ENCODE measurements at regions of chr20 and their contacts with region 1.

Region 1: GRCh38 chr20:24100385-24101011 is 111.9 kb upstream of the GGTLC1 start:
- DNase-seq: peak; percentile 64
- H3K4me3 ChIP-seq: no peak overlapping the region
- H3K27ac ChIP-seq: no peak overlapping the region
- H3K4me1 ChIP-seq: peaks cover 33% of the 10 kb centered on the region
- H3K27me3 ChIP-seq: peaks cover 0 to 2% of the 10 kb centered on the region in 2 experiments
- CTCF ChIP-seq: peak; percentile 77 to 86
- POLR2A ChIP-seq: no peak

Region 2: DNA sequence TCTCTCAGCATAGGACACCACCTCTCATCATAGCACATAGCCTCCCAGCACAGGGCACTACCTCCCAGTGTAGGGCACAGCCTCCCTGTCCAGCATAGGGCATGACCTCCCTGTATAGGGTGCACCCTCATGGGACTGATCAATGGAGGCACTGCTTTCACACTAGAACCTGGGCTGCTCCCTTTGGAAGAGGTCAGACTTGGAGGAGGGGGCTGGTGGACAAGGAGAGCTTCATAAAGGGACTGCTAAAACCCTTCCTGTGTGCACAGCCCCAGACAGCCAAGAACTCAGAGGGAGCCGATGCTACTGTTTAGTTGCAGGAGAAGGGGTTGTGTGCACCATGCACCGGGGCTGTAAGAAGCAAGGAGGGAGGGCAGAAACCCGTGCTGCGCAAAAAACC is 389.7 kb before region 1 on chr20:
- CTCF ChIA-PET with region 1: no interaction called
- POLR2A ChIA-PET with region 1: no interaction called
- dilution Hi-C with region 1: no loop called
- intact Hi-C with region 1: no loop called
- DNase-seq: no peak
- H3K4me3 ChIP-seq: no peak overlapping the region
- H3K27ac ChIP-seq: no peak overlapping the region
- H3K4me1 ChIP-seq: no peaks in the 10 kb centered on the region
- H3K27me3 ChIP-seq: peaks cover 10 to 13% of the 10 kb centered on the region in 2 experiments
- CTCF ChIP-seq: no peak
- POLR2A ChIP-seq: no peak

Region 3: GRCh38 chr20:23889775-23890211 is 210.7 kb before region 1 on chr20:
- CTCF ChIA-PET with region 1: interaction called, 3 read pairs
- POLR2A ChIA-PET with region 1: no interaction called
- dilution Hi-C with region 1: no loop called
- intact Hi-C with region 1: loop called (anchors 5 kb)
- DNase-seq: peak; percentile 42
- H3K4me3 ChIP-seq: no peak overlapping the region
- H3K27ac ChIP-seq: no peak overlapping the region
- H3K4me1 ChIP-seq: no peaks in the 10 kb centered on the region
- H3K27me3 ChIP-seq: no peaks in the 10 kb centered on the region
- CTCF ChIP-seq: peak; percentile 63 to 73
- POLR2A ChIP-seq: no peak

Region 4: DNA sequence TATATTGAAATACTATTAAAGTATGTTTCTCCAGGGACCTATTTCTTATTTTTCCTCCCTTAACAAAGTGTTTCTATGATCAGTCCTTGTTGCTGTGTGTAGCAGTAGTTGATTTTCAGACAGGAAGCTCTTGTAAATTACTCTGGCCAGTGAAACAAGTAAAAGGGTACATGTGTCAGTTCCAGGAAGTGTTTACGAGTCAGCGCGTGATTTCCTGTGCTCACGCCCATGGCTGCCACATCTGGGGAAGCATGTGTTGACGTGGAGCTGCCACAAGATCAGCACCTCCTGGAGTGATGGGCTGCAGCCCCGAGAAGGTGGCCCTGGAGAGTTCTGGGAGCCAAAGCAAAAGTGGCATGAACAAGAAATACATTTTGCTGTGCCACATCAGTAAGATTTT is 73.3 kb before region 1 on chr20:
- CTCF ChIA-PET with region 1: interaction called, 6 read pairs
- POLR2A ChIA-PET with region 1: no interaction called
- dilution Hi-C with region 1: no loop called
- intact Hi-C with region 1: loop called (anchors 1 kb)
- DNase-seq: peak; percentile 90
- H3K4me3 ChIP-seq: no peak overlapping the region
- H3K27ac ChIP-seq: peak overlapping the region; percentile 85
- H3K4me1 ChIP-seq: peaks cover 14% of the 10 kb centered on the region
- H3K27me3 ChIP-seq: no peaks in the 10 kb centered on the region
- CTCF ChIP-seq: no peak
- POLR2A ChIP-seq: peak; percentile 48

Region 5: GRCh38 chr20:24149881-24150307 is 49.4 kb after region 1 on chr20:
- CTCF ChIA-PET with region 1: interaction called, 14 read pairs
- POLR2A ChIA-PET with region 1: no interaction called
- dilution Hi-C with region 1: no loop called
- intact Hi-C with region 1: no loop called
- DNase-seq: no peak
- H3K4me3 ChIP-seq: no peak overlapping the region
- H3K27ac ChIP-seq: no peak overlapping the region
- H3K4me1 ChIP-seq: no peaks in the 10 kb centered on the region
- H3K27me3 ChIP-seq: peaks cover 0 to 2% of the 10 kb centered on the region in 2 experiments
- CTCF ChIP-seq: peak; percentile 24 to 66
- POLR2A ChIP-seq: no peak

Region 6: GRCh38 chr20:24619212-24619611 is 518.7 kb after region 1 on chr20:
- CTCF ChIA-PET with region 1: no interaction called
- POLR2A ChIA-PET with region 1: no interaction called
- dilution Hi-C with region 1: no loop called
- intact Hi-C with region 1: no loop called
- DNase-seq: no peak
- H3K4me3 ChIP-seq: no peak overlapping the region
- H3K27ac ChIP-seq: no peak overlapping the region
- H3K4me1 ChIP-seq: no peaks in the 10 kb centered on the region
- H3K27me3 ChIP-seq: no peaks in the 10 kb centered on the region
- CTCF ChIP-seq: no peak
- POLR2A ChIP-seq: no peak

Region 7: GRCh38 chr20:25178563-25179438 is 1078.3 kb after region 1 on chr20:
- CTCF ChIA-PET with region 1: interaction called, 3 read pairs
- POLR2A ChIA-PET with region 1: no interaction called
- dilution Hi-C with region 1: no loop called
- intact Hi-C with region 1: loop called (anchors 10 kb)
- DNase-seq: peak; percentile 65
- H3K4me3 ChIP-seq: no peak overlapping the region
- H3K27ac ChIP-seq: no peak overlapping the region
- H3K4me1 ChIP-seq: peaks cover 2% of the 10 kb centered on the region
- H3K27me3 ChIP-seq: peaks cover 0 to 2% of the 10 kb centered on the region in 2 experiments
- CTCF ChIP-seq: peak; percentile 46 to 55
- POLR2A ChIP-seq: no peak

Measured in endothelial cell of umbilical vein (primary cell).